CD8-positive, alpha-beta memory T cell (primary cell): ENCODE measurements at regions of chr18 and their contacts with region 1.

Region 1: DNA sequence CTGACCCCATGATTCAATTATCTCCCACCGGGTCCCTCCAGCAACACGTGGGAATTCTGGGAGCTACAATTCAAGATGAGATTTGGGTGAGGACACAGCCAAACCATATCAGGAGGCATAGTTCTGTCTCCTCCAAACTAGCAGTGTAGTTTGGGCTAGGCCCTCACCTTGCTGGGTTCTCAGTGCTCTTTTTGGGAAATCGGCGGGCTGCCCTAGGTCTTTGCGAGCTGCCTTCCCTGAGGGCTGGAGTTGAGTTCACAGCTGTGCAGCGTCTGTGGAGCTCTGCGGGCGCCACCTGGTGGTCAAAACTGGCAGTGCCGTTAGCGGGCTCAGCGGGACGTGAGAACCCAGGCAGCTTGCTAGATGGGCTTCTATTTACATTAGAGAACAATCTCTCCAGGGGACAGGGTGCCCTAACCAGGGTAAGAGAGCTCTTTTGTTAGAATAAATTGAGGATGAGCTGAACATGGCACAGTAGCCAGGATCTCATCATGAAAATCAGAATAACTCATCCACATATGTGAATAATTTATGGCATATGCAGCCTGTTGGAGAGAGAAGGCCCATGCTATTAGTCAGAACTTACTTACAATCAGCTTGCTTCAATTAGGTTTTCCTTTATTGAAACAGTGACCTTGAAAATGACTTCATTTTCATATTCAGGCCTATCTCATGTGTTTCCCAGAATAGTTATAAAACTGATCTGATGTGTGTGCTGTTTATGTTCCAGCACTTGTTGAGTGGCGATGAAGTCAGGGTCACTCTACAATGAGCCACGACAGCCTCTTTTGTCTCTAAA is 27.4 kb upstream of the YES1 start:
- DNase-seq: peak; percentile 64 to 86 (median 78)
- H3K4me3 ChIP-seq: no peak overlapping the region
- H3K4me3 Mint-ChIP-seq: no peak overlapping the region
- H3K27ac ChIP-seq: no peak overlapping the region
- H3K27ac Mint-ChIP-seq: peak overlapping the region in 1 of 8 donors; percentile 17
- H3K4me1 ChIP-seq: no peaks in the 10 kb centered on the region
- H3K4me1 Mint-ChIP-seq: peaks cover 0 to 4% (median 4%) of the 10 kb centered on the region in 3 donors
- H3K27me3 ChIP-seq: no peaks in the 10 kb centered on the region
- H3K27me3 Mint-ChIP-seq: peaks cover 3% of the 10 kb centered on the region in 2 donors

Region 2: DNA sequence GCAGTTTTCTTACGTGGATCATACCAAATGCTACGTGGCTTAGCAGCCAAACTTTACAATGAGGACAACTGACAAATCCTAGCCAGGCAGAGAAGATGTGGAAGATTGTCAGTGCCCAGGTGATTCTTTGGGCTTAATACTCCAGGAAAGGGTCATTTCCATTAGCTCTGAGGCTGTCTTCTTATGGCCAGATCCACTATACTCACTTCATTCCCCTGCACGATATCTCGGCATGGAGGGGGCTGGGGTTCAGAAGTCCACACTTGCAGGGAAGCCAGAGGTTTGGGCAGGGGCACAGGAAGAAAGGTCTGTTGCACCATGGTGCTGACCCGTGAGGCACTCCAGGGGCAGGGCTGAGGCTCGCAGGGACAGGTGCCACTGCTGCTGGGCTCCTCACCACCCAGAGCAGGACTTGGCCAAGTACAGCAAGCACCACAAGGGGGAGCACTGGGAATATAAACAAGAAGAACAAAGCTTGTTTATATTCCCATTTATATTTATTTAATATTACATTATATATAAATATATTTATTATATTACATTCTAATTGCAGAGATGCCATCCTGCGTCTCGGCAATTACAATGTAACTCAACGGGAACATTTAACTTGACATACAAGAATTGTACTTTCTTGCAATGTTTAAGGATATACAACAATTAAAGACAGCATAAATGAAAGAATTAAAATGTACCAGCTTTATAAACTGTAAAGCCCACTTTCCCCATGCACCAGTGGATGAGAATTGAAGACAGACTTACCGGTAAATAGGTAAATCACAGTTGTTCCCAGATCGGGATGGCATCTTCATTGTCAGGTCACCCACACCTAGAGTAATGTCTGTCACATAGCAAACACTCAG is 215.4 kb before region 1 on chr18:
- CTCF ChIA-PET with region 1: interaction called, 28 read pairs
- POLR2A ChIA-PET with region 1: no interaction called
- DNase-seq: peak; percentile 20 to 67 (median 31)
- H3K4me3 ChIP-seq: no peak overlapping the region
- H3K4me3 Mint-ChIP-seq: no peak overlapping the region
- H3K27ac ChIP-seq: no peak overlapping the region
- H3K27ac Mint-ChIP-seq: no peak overlapping the region
- H3K4me1 ChIP-seq: no peaks in the 10 kb centered on the region
- H3K4me1 Mint-ChIP-seq: peaks cover 0 to 2% (median 0%) of the 10 kb centered on the region in 3 donors
- H3K27me3 ChIP-seq: no peaks in the 10 kb centered on the region
- H3K27me3 Mint-ChIP-seq: peaks cover 10 to 24% of the 10 kb centered on the region in 2 donors

Region 3: GRCh38 chr18:741931-742512 is 97.4 kb before region 1 on chr18:
- CTCF ChIA-PET with region 1: interaction called, 143 read pairs
- POLR2A ChIA-PET with region 1: no interaction called
- DNase-seq: peak in 2 of 5 donors; percentile 40 to 42
- H3K4me3 ChIP-seq: no peak overlapping the region
- H3K4me3 Mint-ChIP-seq: no peak overlapping the region
- H3K27ac ChIP-seq: no peak overlapping the region
- H3K27ac Mint-ChIP-seq: peak overlapping the region in 1 of 8 donors; percentile 58
- H3K4me1 ChIP-seq: no peaks in the 10 kb centered on the region
- H3K4me1 Mint-ChIP-seq: peaks cover 0 to 8% (median 3%) of the 10 kb centered on the region in 3 donors
- H3K27me3 ChIP-seq: no peaks in the 10 kb centered on the region
- H3K27me3 Mint-ChIP-seq: no peaks in the 10 kb centered on the region

Region 4: GRCh38 chr18:773980-774624 is 65.3 kb before region 1 on chr18:
- CTCF ChIA-PET with region 1: no interaction called
- POLR2A ChIA-PET with region 1: no interaction called
- DNase-seq: no peak
- H3K4me3 ChIP-seq: no peak overlapping the region
- H3K4me3 Mint-ChIP-seq: peak overlapping the region in 1 of 7 donors; percentile 47
- H3K27ac ChIP-seq: peak overlapping the region; percentile 59
- H3K27ac Mint-ChIP-seq: peak overlapping the region in 1 of 8 donors; percentile 22
- H3K4me1 ChIP-seq: no peaks in the 10 kb centered on the region
- H3K4me1 Mint-ChIP-seq: peaks cover 28 to 35% (median 32%) of the 10 kb centered on the region in 3 donors
- H3K27me3 ChIP-seq: no peaks in the 10 kb centered on the region
- H3K27me3 Mint-ChIP-seq: no peaks in the 10 kb centered on the region

Region 5: GRCh38 chr18:812376-813171 is 26.8 kb before region 1 on chr18:
- CTCF ChIA-PET with region 1: interaction called, 10 read pairs
- POLR2A ChIA-PET with region 1: no interaction called
- DNase-seq: peak; percentile 74 to 89 (median 82)
- H3K4me3 ChIP-seq: peak overlapping the region; percentile 67
- H3K4me3 Mint-ChIP-seq: peak overlapping the region; percentile 86 to 97 (median 96)
- H3K27ac ChIP-seq: peak overlapping the region; percentile 82
- H3K27ac Mint-ChIP-seq: peak overlapping the region; percentile 88 to 99 (median 98)
- H3K4me1 ChIP-seq: peaks cover 48% of the 10 kb centered on the region
- H3K4me1 Mint-ChIP-seq: peaks cover 65 to 74% (median 65%) of the 10 kb centered on the region in 3 donors
- H3K27me3 ChIP-seq: no peaks in the 10 kb centered on the region
- H3K27me3 Mint-ChIP-seq: peaks cover 0 to 3% of the 10 kb centered on the region in 2 donors

Region 6: DNA sequence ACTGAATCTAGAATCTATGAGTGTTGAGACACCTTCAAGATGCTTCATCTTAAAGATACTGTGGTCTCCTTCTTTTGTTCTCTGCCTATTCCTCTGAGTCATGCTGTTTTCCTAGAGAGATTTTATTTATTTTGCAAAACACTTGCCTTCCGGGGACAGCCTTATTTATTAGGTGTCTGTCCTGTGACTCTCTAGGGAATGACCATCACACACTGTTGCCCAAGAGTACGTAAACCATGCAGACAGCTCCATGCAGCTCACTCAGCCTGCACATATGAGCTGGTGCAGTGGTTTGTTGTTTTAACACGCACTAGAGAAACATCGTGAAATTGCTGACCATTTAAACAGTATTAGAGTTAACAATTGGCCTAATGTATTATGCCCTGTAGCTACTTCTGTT is 52.9 kb after region 1 on chr18:
- CTCF ChIA-PET with region 1: no interaction called
- POLR2A ChIA-PET with region 1: no interaction called
- DNase-seq: no peak
- H3K4me3 ChIP-seq: no peak overlapping the region
- H3K4me3 Mint-ChIP-seq: no peak overlapping the region
- H3K27ac ChIP-seq: no peak overlapping the region
- H3K27ac Mint-ChIP-seq: no peak overlapping the region
- H3K4me1 ChIP-seq: no peaks in the 10 kb centered on the region
- H3K4me1 Mint-ChIP-seq: no peaks in the 10 kb centered on the region
- H3K27me3 ChIP-seq: no peaks in the 10 kb centered on the region
- H3K27me3 Mint-ChIP-seq: peaks cover 8 to 39% of the 10 kb centered on the region in 2 donors